HepG2 (cell line): ENCODE measurements at regions of chr7 and their contacts with region 1.

Region 1: DNA sequence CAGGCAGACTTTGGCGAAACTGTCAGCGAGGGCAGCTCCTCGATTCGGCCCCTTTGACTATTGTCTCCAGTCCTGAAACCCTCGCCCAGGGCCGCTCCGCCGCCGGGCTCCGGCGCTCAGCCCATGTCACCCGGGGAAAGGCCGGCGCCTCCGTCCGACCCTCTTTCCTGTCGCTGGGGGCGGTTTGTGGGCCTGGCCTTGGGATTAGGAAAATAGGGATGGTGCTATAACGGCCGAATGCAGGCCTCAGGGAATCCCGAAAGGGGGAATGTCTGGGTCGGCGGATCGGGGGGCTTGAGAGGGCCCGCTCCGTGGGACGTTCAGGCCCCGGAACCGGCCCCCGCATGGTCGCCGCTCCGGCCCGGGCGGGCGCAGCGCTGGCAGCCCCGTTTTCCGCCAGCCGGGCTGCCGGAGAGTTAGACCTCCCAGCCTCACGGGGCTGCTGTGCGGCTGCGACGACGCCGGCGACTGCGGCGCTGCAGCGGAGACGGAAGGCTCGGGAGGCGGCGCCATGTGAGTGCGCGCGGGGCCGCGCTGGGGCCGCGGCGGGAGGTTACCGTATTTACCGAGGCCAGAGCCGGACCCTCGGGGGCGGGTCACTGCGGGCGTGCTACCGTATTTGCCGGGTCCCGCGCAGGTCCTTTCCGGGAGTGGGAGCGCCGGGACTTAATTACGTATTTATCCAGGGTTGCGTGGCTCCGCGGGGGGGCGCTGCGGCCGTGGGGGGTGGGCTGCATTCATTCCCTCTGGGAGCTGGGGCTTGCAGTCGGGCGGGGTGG is 25.9 kb downstream of the ZNF775 start:
- DNase-seq: peak; percentile 75
- ATAC-seq: peak; percentile 72
- H3K4me3 ChIP-seq: peak overlapping the region; percentile 75 to 81 (median 79)
- H3K27ac ChIP-seq: peak overlapping the region; percentile 69
- H3K4me1 ChIP-seq: peaks cover 65% of the 10 kb centered on the region
- H3K27me3 ChIP-seq: no peaks in the 10 kb centered on the region
- CTCF ChIP-seq: peak; percentile 55
- EP300 ChIP-seq: peak; percentile 19 to 26; a peak in 1 of 4 replicates
- POLR2A ChIP-seq: peak; percentile 65 to 69
- RAD21 ChIP-seq: peak; percentile 55

Region 2: DNA sequence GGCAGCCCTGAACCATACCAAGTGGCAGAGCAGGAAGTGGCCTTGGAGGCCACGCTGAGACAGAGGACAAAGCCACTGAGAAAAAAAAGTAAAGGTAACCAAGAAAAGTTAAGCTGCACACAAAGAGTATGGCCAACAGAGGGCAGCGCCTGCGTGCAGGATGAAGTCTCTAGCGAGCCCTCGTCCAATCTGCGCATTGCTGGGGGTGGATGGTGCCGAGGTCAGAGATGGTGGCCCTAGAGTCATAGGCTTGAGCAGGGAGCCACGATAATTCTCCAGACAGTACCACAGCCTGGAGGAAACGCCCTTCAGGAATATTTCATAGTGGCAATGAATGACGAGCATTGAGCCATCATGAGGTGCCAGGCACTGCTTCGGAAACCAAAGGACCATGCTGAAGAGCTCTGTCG is 521.5 kb before region 1 on chr7:
- CTCF ChIA-PET with region 1: no interaction called
- POLR2A ChIA-PET with region 1: no interaction called
- in situ Hi-C with region 1: no loop called
- intact Hi-C with region 1: no loop called
- DNase-seq: peak; percentile 41
- ATAC-seq: peak; percentile 39
- H3K4me3 ChIP-seq: no peak overlapping the region
- H3K27ac ChIP-seq: no peak overlapping the region
- H3K4me1 ChIP-seq: peaks cover 47% of the 10 kb centered on the region
- H3K27me3 ChIP-seq: no peaks in the 10 kb centered on the region; a peak in 1 of 5 replicates
- CTCF ChIP-seq: peak; percentile 85
- EP300 ChIP-seq: no peak
- POLR2A ChIP-seq: no peak
- RAD21 ChIP-seq: peak; percentile 70

Region 3: GRCh38 chr7:150322833-150323681 is 81.9 kb before region 1 on chr7 and contains the starts of genes ACTR3C and LRRC61:
- CTCF ChIA-PET with region 1: no interaction called
- POLR2A ChIA-PET with region 1: interaction called, 41 read pairs
- in situ Hi-C with region 1: no loop called
- intact Hi-C with region 1: no loop called
- DNase-seq: peak; percentile 74
- ATAC-seq: peak; percentile 82
- H3K4me3 ChIP-seq: peak within 1 kb of the TSS; percentile 74 to 81 (median 77)
- H3K27ac ChIP-seq: peak within 1 kb of the TSS; percentile 84
- H3K4me1 ChIP-seq: peaks cover 54% of the 10 kb centered on the region
- H3K27me3 ChIP-seq: no peaks in the 10 kb centered on the region; a peak in 1 of 5 replicates
- CTCF ChIP-seq: peak; percentile 34; the same call in 1 of the 2 replicates
- EP300 ChIP-seq: peak in 1 of 2 experiments; percentile 35; a peak in 1 of 4 replicates
- POLR2A ChIP-seq: peak; percentile 87 to 94
- RAD21 ChIP-seq: no peak; the same call in none of the 2 replicates
- total RNA-seq, gene ACTR3C: 4.1 and 7.5 TPM in 2 replicates
- total RNA-seq, gene LRRC61: 34.8 and 38.4 TPM in 2 replicates

Region 4: DNA sequence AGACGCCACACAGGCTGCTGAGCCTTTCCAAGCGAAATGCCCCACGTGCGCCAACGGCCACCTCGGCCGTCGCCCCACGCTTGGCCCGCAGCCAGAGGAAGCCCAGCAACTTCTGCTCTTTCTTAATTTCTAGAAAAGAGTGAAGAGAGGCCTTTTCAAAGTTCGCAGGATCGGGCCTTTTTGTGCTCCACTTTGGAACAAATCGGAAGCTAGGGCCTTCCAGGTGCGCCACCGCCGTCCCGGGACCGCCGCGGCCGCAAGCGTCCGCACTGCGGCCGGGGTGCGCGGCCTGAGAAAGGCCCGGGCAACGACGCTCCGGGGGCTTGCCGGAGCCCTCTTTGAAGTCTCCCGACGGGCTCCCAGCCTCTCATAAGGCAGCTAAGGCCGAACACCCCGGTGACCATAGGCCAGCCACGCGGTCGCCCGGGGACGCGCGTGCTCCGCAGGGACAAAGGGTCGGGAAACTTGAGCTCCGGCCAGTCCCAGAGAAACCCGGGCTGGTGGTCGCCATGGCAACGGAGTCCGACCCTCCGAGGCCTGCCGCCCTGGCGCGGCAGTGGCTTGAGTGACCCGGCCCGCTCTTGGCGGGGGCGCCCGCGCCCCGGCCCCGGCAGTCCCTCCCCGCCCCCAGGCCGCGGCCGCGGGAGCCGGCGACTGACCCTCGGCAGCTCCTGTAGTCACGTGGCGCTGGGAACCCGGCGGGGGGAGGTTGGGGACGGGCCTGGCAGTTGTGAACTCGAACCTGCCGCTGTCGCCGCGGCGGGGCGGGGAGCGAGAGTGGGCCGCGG is 36.7 kb before region 1 on chr7 and contains the start of gene REPIN1:
- CTCF ChIA-PET with region 1: no interaction called
- POLR2A ChIA-PET with region 1: interaction called, 86 read pairs
- in situ Hi-C with region 1: no loop called
- intact Hi-C with region 1: no loop called
- DNase-seq: peak; percentile 86
- ATAC-seq: peak; percentile 71
- H3K4me3 ChIP-seq: peak within 1 kb of the TSS; percentile 68 to 84 (median 82)
- H3K27ac ChIP-seq: peak within 1 kb of the TSS; percentile 100
- H3K4me1 ChIP-seq: peaks cover 35% of the 10 kb centered on the region
- H3K27me3 ChIP-seq: no peaks in the 10 kb centered on the region
- CTCF ChIP-seq: peak; percentile 26; the same call in 1 of the 2 replicates
- EP300 ChIP-seq: peak; percentile 43 to 49; a peak in 2 of 4 replicates
- POLR2A ChIP-seq: peak; percentile 50 to 72; a peak in 3 of 4 replicates
- RAD21 ChIP-seq: 0 out of 2 replicates have a peak, but pooled peaks have one; percentile 54
- total RNA-seq, gene REPIN1: 86.4 and 108 TPM in 2 replicates

Region 5: GRCh38 chr7:150388709-150389531 is 16.1 kb before region 1 on chr7:
- CTCF ChIA-PET with region 1: no interaction called
- POLR2A ChIA-PET with region 1: interaction called, 181 read pairs
- in situ Hi-C with region 1: no loop called
- intact Hi-C with region 1: loop called (anchors 2 kb)
- DNase-seq: peak; percentile 98
- ATAC-seq: peak; percentile 93
- H3K4me3 ChIP-seq: no peak overlapping the region
- H3K27ac ChIP-seq: peak overlapping the region; percentile 86
- H3K4me1 ChIP-seq: peaks cover 55% of the 10 kb centered on the region
- H3K27me3 ChIP-seq: no peaks in the 10 kb centered on the region
- CTCF ChIP-seq: peak; percentile 100
- EP300 ChIP-seq: peak; percentile 94 to 95
- POLR2A ChIP-seq: peak in 1 of 2 experiments; percentile 35; a peak in 1 of 4 replicates
- RAD21 ChIP-seq: peak; percentile 100

Region 6: DNA sequence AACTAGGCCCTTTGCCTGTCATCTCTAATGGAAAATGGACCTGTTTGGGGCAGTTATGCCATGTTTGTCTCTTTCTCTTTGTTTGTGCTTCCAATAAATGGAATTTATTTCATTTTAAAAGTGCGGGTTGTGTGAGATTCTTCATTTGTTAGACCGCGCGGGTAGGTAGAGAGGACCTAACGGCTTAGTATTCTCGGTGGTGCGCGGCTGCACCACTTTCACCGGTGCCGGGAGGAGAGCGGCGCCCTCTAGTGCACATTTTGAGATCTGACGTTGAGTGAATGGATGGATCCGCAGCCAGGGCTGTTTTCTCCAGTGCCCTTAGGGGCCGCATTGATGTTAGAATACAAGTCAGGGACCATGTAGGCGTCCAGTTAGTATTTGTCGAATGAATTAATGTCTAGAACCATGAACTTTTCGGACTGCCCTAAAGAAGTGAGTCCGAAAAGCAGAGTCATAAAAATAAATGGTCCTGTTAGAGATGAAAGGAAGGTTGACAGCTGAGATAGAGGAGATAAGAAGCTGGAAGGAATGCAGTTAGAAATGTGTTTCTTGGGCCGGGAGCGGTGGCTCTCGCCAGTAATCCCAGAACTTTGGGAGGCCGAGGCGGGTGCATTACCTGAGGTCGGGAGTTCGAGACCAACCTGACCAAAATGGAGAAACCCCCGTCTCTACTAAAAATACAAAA is 16.1 kb after region 1 on chr7:
- CTCF ChIA-PET with region 1: no interaction called
- POLR2A ChIA-PET with region 1: interaction called, 47 read pairs
- in situ Hi-C with region 1: no loop called
- intact Hi-C with region 1: loop called (anchors 2 kb)
- DNase-seq: peak; percentile 70
- ATAC-seq: peak; percentile 99
- H3K4me3 ChIP-seq: peak overlapping the region; percentile 18 to 31 (median 30); a peak in 3 of 6 replicates
- H3K27ac ChIP-seq: no peak overlapping the region
- H3K4me1 ChIP-seq: peaks cover 16% of the 10 kb centered on the region
- H3K27me3 ChIP-seq: peaks cover 0 to 5% of the 10 kb centered on the region in 2 experiments; a peak in 1 of 5 replicates
- CTCF ChIP-seq: peak; percentile 91
- EP300 ChIP-seq: no peak
- POLR2A ChIP-seq: no peak
- RAD21 ChIP-seq: peak; percentile 85

Region 7: DNA sequence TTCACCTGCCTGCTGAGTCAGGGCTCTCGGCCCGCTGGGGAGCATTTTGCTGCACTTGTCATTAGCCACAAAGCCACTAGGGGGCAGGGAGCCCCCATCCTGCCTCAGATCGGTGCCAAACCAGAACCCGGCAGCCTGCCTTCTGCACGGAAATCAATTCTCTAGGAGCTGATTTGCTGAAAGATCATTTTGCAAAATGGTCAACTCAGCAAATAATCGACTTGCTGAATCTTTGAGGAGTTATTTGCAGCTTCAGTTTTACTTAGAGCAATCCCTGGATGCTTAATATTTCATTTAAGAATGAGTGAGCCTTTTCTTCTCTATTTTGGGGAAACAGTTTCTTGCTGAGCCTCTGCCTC is 43.8 kb after region 1 on chr7:
- CTCF ChIA-PET with region 1: no interaction called
- POLR2A ChIA-PET with region 1: no interaction called
- in situ Hi-C with region 1: no loop called
- intact Hi-C with region 1: no loop called
- DNase-seq: peak; percentile 23
- ATAC-seq: peak; percentile 92
- H3K4me3 ChIP-seq: no peak overlapping the region
- H3K27ac ChIP-seq: no peak overlapping the region
- H3K4me1 ChIP-seq: no peaks in the 10 kb centered on the region
- H3K27me3 ChIP-seq: peaks cover 4 to 63% of the 10 kb centered on the region in 2 experiments; a peak in 4 of 5 replicates
- CTCF ChIP-seq: peak; percentile 90
- EP300 ChIP-seq: no peak
- POLR2A ChIP-seq: no peak
- RAD21 ChIP-seq: peak; percentile 69

Region 8: GRCh38 chr7:150514748-150515222 is 109.8 kb after region 1 on chr7 and contains the start of gene GIMAP7:
- CTCF ChIA-PET with region 1: no interaction called
- POLR2A ChIA-PET with region 1: no interaction called
- in situ Hi-C with region 1: no loop called
- intact Hi-C with region 1: no loop called
- DNase-seq: no peak
- ATAC-seq: peak; percentile 69
- H3K4me3 ChIP-seq: no peak within 1 kb of the TSS
- H3K27ac ChIP-seq: no peak within 1 kb of the TSS
- H3K4me1 ChIP-seq: no peaks in the 10 kb centered on the region
- H3K27me3 ChIP-seq: peaks cover 0 to 8% of the 10 kb centered on the region in 2 experiments; a peak in 2 of 5 replicates
- CTCF ChIP-seq: no peak
- EP300 ChIP-seq: no peak
- POLR2A ChIP-seq: no peak
- RAD21 ChIP-seq: no peak
- total RNA-seq, gene GIMAP7: not detected in 2 replicates

Region 9: GRCh38 chr7:150556521-150557138 is 151.6 kb after region 1 on chr7:
- CTCF ChIA-PET with region 1: no interaction called
- POLR2A ChIA-PET with region 1: no interaction called
- in situ Hi-C with region 1: no loop called
- intact Hi-C with region 1: no loop called
- DNase-seq: no peak
- ATAC-seq: no peak
- H3K4me3 ChIP-seq: no peak overlapping the region
- H3K27ac ChIP-seq: no peak overlapping the region
- H3K4me1 ChIP-seq: no peaks in the 10 kb centered on the region
- H3K27me3 ChIP-seq: no peaks in the 10 kb centered on the region
- CTCF ChIP-seq: no peak
- EP300 ChIP-seq: no peak
- POLR2A ChIP-seq: no peak
- RAD21 ChIP-seq: no peak